ENCODE measurements at regions of chr6 and their contacts with region 1.

Region 1: GRCh38 chr6:32952817-32953739 is at the start of gene HLA-DMA:
- DNase-seq: peak; percentile 98
- H3K4me3 Mint-ChIP-seq: peak within 1 kb of the TSS; percentile 75
- H3K27ac Mint-ChIP-seq: peak within 1 kb of the TSS; percentile 82
- H3K4me1 Mint-ChIP-seq: peaks cover 41% of the 10 kb centered on the region
- H3K27me3 Mint-ChIP-seq: no peaks in the 10 kb centered on the region
- CTCF ChIP-seq: peak; percentile 93
- total RNA-seq, gene HLA-DMA: 98.0 and 104 TPM in 2 replicates

Region 2: DNA sequence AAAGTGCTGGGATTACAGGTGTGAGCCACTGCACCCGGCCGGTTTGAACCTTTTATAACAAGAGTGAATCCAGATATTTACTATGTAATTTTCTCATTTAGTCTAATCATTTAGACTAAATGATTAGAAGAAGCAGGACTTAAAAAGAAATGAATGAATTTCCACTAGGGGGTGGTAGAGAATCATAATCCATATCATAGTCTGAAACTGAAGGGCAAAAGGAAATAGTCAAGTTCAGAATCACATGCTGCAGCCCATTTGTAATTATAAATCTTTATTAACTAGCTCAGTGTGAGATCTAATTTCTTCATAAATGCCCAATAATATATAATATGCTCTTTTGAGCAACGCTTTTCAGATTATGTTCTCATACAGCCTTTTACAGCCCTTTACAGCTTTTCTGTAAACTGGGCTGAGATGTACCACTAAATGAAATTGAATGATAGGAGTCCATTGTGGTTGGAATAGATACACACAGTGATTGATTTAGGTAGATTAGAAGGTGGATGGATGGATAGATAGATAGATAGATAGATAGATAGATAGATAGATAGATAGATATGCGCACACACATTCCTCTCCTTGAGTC is 67.3 kb before region 1 on chr6:
- CTCF ChIA-PET with region 1: interaction called, 38 read pairs
- intact Hi-C with region 1: no loop called
- DNase-seq: no peak
- H3K4me3 Mint-ChIP-seq: no peak overlapping the region
- H3K27ac Mint-ChIP-seq: no peak overlapping the region
- H3K4me1 Mint-ChIP-seq: peaks cover 23% of the 10 kb centered on the region
- H3K27me3 Mint-ChIP-seq: no peaks in the 10 kb centered on the region
- CTCF ChIP-seq: peak; percentile 64

Region 3: GRCh38 chr6:32894080-32895005 is 58.7 kb before region 1 on chr6:
- CTCF ChIA-PET with region 1: interaction called, 12 read pairs
- intact Hi-C with region 1: no loop called
- DNase-seq: peak; percentile 99
- H3K4me3 Mint-ChIP-seq: peak overlapping the region; percentile 88
- H3K27ac Mint-ChIP-seq: peak overlapping the region; percentile 97
- H3K4me1 Mint-ChIP-seq: peaks cover 38% of the 10 kb centered on the region
- H3K27me3 Mint-ChIP-seq: no peaks in the 10 kb centered on the region
- CTCF ChIP-seq: peak; percentile 37

Region 4: GRCh38 chr6:32933636-32934085 is 19.4 kb before region 1 on chr6:
- CTCF ChIA-PET with region 1: interaction called, 56 read pairs
- intact Hi-C with region 1: no loop called
- DNase-seq: peak; percentile 86
- H3K4me3 Mint-ChIP-seq: no peak overlapping the region
- H3K27ac Mint-ChIP-seq: no peak overlapping the region
- H3K4me1 Mint-ChIP-seq: peaks cover 10% of the 10 kb centered on the region
- H3K27me3 Mint-ChIP-seq: no peaks in the 10 kb centered on the region
- CTCF ChIP-seq: peak; percentile 87

Region 5: DNA sequence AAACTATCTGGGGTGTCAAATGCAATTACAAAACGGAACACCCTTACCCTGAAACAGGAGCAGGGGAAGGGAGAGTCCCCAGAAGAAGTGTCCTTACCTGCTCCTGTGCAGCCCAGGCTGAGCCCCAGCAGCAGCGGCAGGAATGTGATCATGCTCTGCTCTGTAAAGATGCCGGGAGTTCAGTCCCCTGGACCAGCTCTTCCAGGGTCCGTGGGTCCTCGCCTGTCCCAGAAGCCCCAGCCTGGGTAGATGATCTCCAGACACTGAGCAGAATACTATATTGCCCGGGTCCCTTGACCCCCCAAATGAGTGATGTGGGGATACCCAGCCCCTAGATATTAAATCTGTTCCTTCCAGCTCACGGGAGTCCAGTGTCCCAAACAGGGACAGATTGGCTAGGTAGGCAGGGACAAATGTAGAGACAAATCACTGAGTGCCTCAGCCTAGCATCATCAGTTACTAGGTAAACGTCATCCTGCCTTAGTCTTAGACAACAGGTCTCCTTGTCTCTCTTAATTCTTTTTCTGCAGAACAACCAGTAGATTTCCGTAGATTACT is 12.3 kb before region 1 on chr6 and contains the start of gene HLA-DMB:
- CTCF ChIA-PET with region 1: interaction called, 12 read pairs
- intact Hi-C with region 1: no loop called
- DNase-seq: peak; percentile 81
- H3K4me3 Mint-ChIP-seq: peak within 1 kb of the TSS; percentile 71
- H3K27ac Mint-ChIP-seq: peak within 1 kb of the TSS; percentile 36
- H3K4me1 Mint-ChIP-seq: peaks cover 28% of the 10 kb centered on the region
- H3K27me3 Mint-ChIP-seq: no peaks in the 10 kb centered on the region
- CTCF ChIP-seq: no peak
- total RNA-seq, gene HLA-DMB: 32.4 and 35.9 TPM in 2 replicates

Region 6: GRCh38 chr6:32971581-32972352 is 18.7 kb after region 1 on chr6:
- CTCF ChIA-PET with region 1: interaction called, 76 read pairs
- intact Hi-C with region 1: loop called (anchors 1 kb)
- DNase-seq: peak; percentile 100
- H3K4me3 Mint-ChIP-seq: peak overlapping the region; percentile 77
- H3K27ac Mint-ChIP-seq: peak overlapping the region; percentile 85
- H3K4me1 Mint-ChIP-seq: peaks cover 33% of the 10 kb centered on the region
- H3K27me3 Mint-ChIP-seq: no peaks in the 10 kb centered on the region
- CTCF ChIP-seq: no peak